ENCODE measurements at regions of chr13 and their contacts with region 1.

Region 1: GRCh38 chr13:77397636-77398035 is 70.7 kb upstream of the MYCBP2 start:
- DNase-seq: no peak
- H3K4me3 ChIP-seq: no peak overlapping the region
- H3K27ac ChIP-seq: no peak overlapping the region
- H3K4me1 ChIP-seq: no peaks in the 10 kb centered on the region
- CTCF ChIP-seq: no peak

Region 2: GRCh38 chr13:77002590-77003190 is 394.9 kb before region 1 on chr13:
- CTCF ChIA-PET with region 1: no interaction called
- POLR2A ChIA-PET with region 1: no interaction called
- intact Hi-C with region 1: no loop called
- DNase-seq: peak; percentile 30
- H3K4me3 ChIP-seq: no peak overlapping the region
- H3K27ac ChIP-seq: no peak overlapping the region
- H3K4me1 ChIP-seq: peaks cover 9% of the 10 kb centered on the region
- CTCF ChIP-seq: peak; percentile 85

Region 3: DNA sequence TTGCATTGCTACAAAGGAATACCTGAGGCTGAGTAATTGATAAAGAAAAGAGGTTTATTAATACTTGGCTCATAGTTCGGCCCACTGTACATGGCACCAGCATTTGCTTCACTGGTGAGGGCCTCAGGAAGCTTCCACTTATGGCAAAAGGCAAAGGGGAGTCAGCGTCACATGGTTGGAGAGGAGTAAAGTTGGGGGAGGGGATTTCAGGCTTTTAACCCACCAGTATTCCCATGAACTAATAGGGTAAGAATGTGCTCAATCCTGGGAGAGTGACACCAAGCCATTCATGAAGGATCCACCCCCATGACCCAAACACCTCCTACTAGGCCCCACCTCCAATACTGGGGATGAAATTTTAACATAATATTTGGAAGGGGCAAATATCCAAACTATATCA is 11.8 kb after region 1 on chr13:
- CTCF ChIA-PET with region 1: no interaction called
- POLR2A ChIA-PET with region 1: interaction called, 11 read pairs
- intact Hi-C with region 1: no loop called
- DNase-seq: no peak
- H3K4me3 ChIP-seq: no peak overlapping the region
- H3K27ac ChIP-seq: no peak overlapping the region
- H3K4me1 ChIP-seq: no peaks in the 10 kb centered on the region
- CTCF ChIP-seq: no peak

Measured in OCI-LY7 (cell line).